ENCODE measurements at regions of chr2 and their contacts with region 1.

Region 1: DNA sequence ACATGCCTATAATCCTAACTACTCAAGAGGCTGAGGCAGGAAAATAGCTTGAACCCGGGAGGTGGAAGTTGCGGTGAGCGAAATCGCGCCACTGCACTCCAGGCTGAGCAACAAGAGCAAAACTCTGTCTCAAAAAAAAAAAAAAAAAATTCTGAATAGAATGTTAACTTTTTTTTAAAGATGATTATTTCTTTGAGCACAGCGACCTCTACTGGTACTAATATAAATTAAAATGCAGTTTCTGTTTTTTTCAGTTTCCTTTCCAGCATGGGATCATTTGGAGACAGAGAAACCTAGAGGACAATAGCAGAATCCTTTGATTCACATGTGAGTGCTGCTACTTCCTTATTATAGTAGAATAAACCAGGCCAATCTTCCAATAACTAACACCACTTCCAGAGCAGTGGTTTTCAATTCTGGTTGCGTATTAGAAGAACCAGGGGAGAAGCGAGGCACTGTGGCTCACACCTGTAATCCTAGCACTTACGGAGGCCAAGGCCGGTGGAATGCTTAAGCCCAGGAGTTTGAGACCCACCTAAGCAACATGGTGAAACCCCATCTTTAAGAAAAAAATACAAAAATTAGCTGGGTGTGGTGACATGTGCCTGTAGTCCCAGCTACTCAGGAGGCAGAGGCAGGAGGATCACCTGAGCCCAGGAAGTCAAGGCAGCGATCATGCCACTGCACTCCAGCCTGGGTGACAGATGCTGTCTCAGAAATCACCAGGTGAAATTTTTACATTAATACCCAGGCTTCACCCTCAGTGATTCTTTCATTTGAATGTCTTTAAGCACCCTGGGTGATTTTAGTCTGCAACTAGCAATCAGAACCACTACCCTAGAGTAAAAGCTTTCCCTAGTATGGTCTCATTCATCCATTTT is 10.1 kb downstream of the SRSF7 start:
- DNase-seq: peak in 1 of 2 donors; percentile 78
- ATAC-seq: peak; percentile 39 to 52 (median 47)
- H3K4me3 ChIP-seq: no peak overlapping the region
- H3K4me3 Mint-ChIP-seq: no peak overlapping the region
- H3K27ac ChIP-seq: no peak overlapping the region
- H3K27ac Mint-ChIP-seq: peak overlapping the region; percentile 38 to 63
- H3K4me1 ChIP-seq: peaks cover 3% of the 10 kb centered on the region
- H3K4me1 Mint-ChIP-seq: peaks cover 19 to 27% of the 10 kb centered on the region in 2 donors
- H3K27me3 ChIP-seq: no peaks in the 10 kb centered on the region
- H3K27me3 Mint-ChIP-seq: no peaks in the 10 kb centered on the region
- CTCF ChIP-seq: peak; percentile 90

Region 2: GRCh38 chr2:38535744-38536506 is 205.2 kb before region 1 on chr2:
- intact Hi-C with region 1: loop called (anchors 1 kb)
- DNase-seq: peak; percentile 74 to 87
- ATAC-seq: peak; percentile 91 to 98 (median 96)
- H3K4me3 ChIP-seq: peak overlapping the region; percentile 27
- H3K4me3 Mint-ChIP-seq: peak overlapping the region; percentile 51
- H3K27ac ChIP-seq: no peak overlapping the region
- H3K27ac Mint-ChIP-seq: no peak overlapping the region
- H3K4me1 ChIP-seq: peaks cover 22% of the 10 kb centered on the region
- H3K4me1 Mint-ChIP-seq: peaks cover 0 to 5% of the 10 kb centered on the region in 2 donors
- H3K27me3 ChIP-seq: no peaks in the 10 kb centered on the region
- H3K27me3 Mint-ChIP-seq: peaks cover 28 to 38% of the 10 kb centered on the region in 2 donors
- CTCF ChIP-seq: peak; percentile 79

Region 3: GRCh38 chr2:38581193-38582147 is 159.6 kb before region 1 on chr2:
- intact Hi-C with region 1: loop called (anchors 1 kb)
- DNase-seq: peak in 1 of 2 donors; percentile 88
- ATAC-seq: peak; percentile 78 to 87 (median 80)
- H3K4me3 ChIP-seq: no peak overlapping the region
- H3K4me3 Mint-ChIP-seq: no peak overlapping the region
- H3K27ac ChIP-seq: no peak overlapping the region
- H3K27ac Mint-ChIP-seq: no peak overlapping the region
- H3K4me1 ChIP-seq: no peaks in the 10 kb centered on the region
- H3K4me1 Mint-ChIP-seq: no peaks in the 10 kb centered on the region
- H3K27me3 ChIP-seq: no peaks in the 10 kb centered on the region
- H3K27me3 Mint-ChIP-seq: no peaks in the 10 kb centered on the region
- CTCF ChIP-seq: peak; percentile 78

Region 4: GRCh38 chr2:38602732-38603401 is 138.2 kb before region 1 on chr2 and contains the start of gene HNRNPLL:
- intact Hi-C with region 1: loop called (anchors 5 kb)
- DNase-seq: peak; percentile 77 to 93
- ATAC-seq: peak; percentile 75 to 85 (median 77)
- H3K4me3 ChIP-seq: peak within 1 kb of the TSS; percentile 85
- H3K4me3 Mint-ChIP-seq: peak within 1 kb of the TSS; percentile 90
- H3K27ac ChIP-seq: peak within 1 kb of the TSS; percentile 64
- H3K27ac Mint-ChIP-seq: peak within 1 kb of the TSS; percentile 75 to 77
- H3K4me1 ChIP-seq: peaks cover 16% of the 10 kb centered on the region
- H3K4me1 Mint-ChIP-seq: peaks cover 13 to 23% of the 10 kb centered on the region in 2 donors
- H3K27me3 ChIP-seq: peaks cover 2% of the 10 kb centered on the region
- H3K27me3 Mint-ChIP-seq: peaks cover 14 to 16% of the 10 kb centered on the region in 2 donors
- CTCF ChIP-seq: no peak
- total RNA-seq, gene HNRNPLL: 7.3 to 18.4 (median 8.8) TPM

Region 5: DNA sequence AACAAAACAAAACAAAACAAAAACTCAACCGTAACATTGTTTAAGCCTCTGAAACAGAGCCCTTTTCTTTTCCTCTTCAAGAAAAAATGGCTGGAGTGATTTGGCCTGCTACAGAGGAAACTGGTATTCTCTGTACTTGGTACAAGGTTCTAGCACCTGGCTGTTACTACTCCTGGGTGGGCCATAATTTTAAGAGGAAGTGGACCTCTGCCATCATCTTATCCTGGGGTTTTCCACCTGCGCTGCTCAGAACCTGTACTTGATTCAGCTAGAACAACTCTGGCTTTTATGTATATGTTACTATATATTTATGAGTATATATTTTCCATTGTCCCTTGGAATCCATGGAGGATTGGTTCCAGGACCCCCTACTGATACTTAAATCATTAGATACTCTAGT is 12.4 kb before region 1 on chr2:
- intact Hi-C with region 1: loop called (anchors 1 kb)
- DNase-seq: no peak
- ATAC-seq: no peak
- H3K4me3 ChIP-seq: no peak overlapping the region
- H3K4me3 Mint-ChIP-seq: no peak overlapping the region
- H3K27ac ChIP-seq: no peak overlapping the region
- H3K27ac Mint-ChIP-seq: no peak overlapping the region
- H3K4me1 ChIP-seq: no peaks in the 10 kb centered on the region
- H3K4me1 Mint-ChIP-seq: no peaks in the 10 kb centered on the region
- H3K27me3 ChIP-seq: no peaks in the 10 kb centered on the region
- H3K27me3 Mint-ChIP-seq: no peaks in the 10 kb centered on the region
- CTCF ChIP-seq: no peak

Region 6: DNA sequence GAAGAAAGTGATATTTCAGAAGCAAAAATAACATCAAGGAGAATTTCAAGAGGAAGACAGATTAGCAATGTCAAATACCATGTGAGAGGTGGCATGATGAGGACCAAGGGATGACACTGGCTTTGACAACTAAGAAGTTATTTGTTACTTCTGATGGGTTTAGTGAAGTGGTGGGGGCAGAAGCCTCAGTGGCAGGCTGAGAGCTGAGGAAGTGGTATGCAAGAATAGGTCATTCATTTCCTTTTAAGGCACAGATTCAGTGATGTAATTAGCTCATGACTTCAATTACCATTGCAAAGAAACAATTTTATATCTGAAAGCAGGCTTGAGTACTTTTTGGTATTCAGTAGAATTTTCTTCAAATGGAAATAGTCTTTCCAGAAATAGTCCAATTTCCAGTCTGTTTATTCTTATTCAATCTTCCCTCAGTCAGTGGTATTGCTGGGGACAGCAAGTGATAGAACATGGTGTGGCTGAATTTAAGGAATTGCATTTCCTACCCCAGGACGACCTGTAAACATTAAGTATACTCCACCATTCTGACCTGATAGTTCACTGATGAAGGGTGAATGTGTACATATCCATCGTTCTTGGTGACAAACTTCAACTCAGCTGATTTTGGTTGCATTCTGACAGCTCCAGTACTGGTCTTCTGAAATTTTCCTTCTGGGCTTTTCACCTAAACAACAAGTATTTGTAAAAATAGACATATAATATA is 65.1 kb after region 1 on chr2:
- intact Hi-C with region 1: no loop called
- DNase-seq: no peak
- ATAC-seq: no peak
- H3K4me3 ChIP-seq: no peak overlapping the region
- H3K4me3 Mint-ChIP-seq: no peak overlapping the region
- H3K27ac ChIP-seq: peak overlapping the region; percentile 35
- H3K27ac Mint-ChIP-seq: no peak overlapping the region
- H3K4me1 ChIP-seq: no peaks in the 10 kb centered on the region
- H3K4me1 Mint-ChIP-seq: no peaks in the 10 kb centered on the region
- H3K27me3 ChIP-seq: no peaks in the 10 kb centered on the region
- H3K27me3 Mint-ChIP-seq: no peaks in the 10 kb centered on the region
- CTCF ChIP-seq: no peak